Breast epithelium (tissue), 4 donors: ENCODE measurements at regions of chr2 and their contacts with region 1.

Region 1: GRCh38 chr2:128172191-128172590 is 81.2 kb downstream of the UGGT1 start:
- DNase-seq: no peak
- H3K4me3 ChIP-seq: no peak overlapping the region
- H3K27ac ChIP-seq: no peak overlapping the region
- H3K4me1 ChIP-seq: no peaks in the 10 kb centered on the region
- H3K27me3 ChIP-seq: no peaks in the 10 kb centered on the region
- CTCF ChIP-seq: no peak
- POLR2A ChIP-seq: no peak

Region 2: DNA sequence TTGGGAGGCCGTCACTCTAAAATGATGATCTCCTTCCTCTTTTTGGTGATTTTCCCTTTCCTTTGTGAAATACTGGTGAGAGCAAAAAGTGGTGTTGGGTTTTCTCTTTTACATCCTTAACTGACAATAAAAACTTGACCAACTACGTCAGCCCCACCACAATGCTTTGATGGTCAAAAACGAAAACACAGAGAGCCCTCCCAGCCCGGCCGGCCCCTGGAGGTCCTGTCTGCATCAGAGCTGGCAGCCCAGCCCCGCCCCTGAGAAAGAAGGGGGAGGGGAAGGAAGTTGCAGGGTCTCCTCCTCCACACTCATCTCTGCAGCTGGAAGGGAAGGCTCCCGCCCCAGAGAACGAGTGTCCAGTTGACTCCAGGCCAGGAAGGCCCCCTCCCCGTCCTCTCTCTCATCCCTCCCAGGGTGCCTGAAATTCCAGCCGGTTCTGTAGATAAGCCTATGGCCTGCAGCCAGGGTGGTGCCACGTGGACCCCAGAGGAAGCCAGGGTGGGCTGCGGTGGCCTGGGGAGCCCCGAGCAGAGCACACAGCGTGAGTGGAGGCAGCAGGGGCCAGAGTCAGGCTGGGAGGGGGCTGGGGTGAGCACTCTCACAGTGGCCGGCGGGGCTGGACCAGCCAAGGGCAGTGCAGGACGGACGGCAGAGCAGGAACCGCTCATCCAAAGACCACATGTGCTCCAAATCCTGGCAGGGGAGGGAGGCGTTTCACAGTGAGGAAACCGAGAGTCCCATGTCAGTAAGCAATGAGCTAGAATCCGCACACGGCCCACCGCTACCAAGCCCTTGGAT is 1085.0 kb before region 1 on chr2:
- intact Hi-C with region 1: loop called (anchors 5 kb)
- DNase-seq: peak in 1 of 2 donors; percentile 35
- H3K4me3 ChIP-seq: peak overlapping the region; percentile 11 to 61 (median 19)
- H3K27ac ChIP-seq: peak overlapping the region; percentile 78 to 93
- H3K4me1 ChIP-seq: peaks cover 16 to 18% of the 10 kb centered on the region in 2 donors
- H3K27me3 ChIP-seq: no peaks in the 10 kb centered on the region
- CTCF ChIP-seq: no peak
- POLR2A ChIP-seq: no peak

Region 3: GRCh38 chr2:128187032-128187654 is 15.0 kb after region 1 on chr2:
- intact Hi-C with region 1: no loop called
- DNase-seq: no peak
- H3K4me3 ChIP-seq: peak overlapping the region in 1 of 3 donors; percentile 7
- H3K27ac ChIP-seq: no peak overlapping the region
- H3K4me1 ChIP-seq: no peaks in the 10 kb centered on the region
- H3K27me3 ChIP-seq: no peaks in the 10 kb centered on the region
- CTCF ChIP-seq: no peak
- POLR2A ChIP-seq: no peak